Activated naive CD4-positive, alpha-beta T cell treated with anti-CD3 and anti-CD28 coated beads for 36 hours (primary cell): ENCODE measurements at regions of chr17 and their contacts with region 1.

Region 1: GRCh38 chr17:8189711-8190477 is at the start of gene BORCS6:
- DNase-seq: peak; percentile 98
- H3K4me3 Mint-ChIP-seq: no peak within 1 kb of the TSS
- H3K27ac Mint-ChIP-seq: peak within 1 kb of the TSS; percentile 82
- H3K4me1 Mint-ChIP-seq: peaks cover 7% of the 10 kb centered on the region
- H3K27me3 Mint-ChIP-seq: no peaks in the 10 kb centered on the region
- total RNA-seq, gene BORCS6: 4.0 to 4.3 TPM

Region 2: GRCh38 chr17:8079291-8080207 is 110.3 kb before region 1 on chr17:
- CTCF ChIA-PET with region 1: no interaction called
- intact Hi-C with region 1: loop called (anchors 1 kb)
- DNase-seq: peak; percentile 91
- H3K4me3 Mint-ChIP-seq: peak overlapping the region; percentile 95
- H3K27ac Mint-ChIP-seq: peak overlapping the region; percentile 88
- H3K4me1 Mint-ChIP-seq: peaks cover 13% of the 10 kb centered on the region
- H3K27me3 Mint-ChIP-seq: peaks cover 2% of the 10 kb centered on the region

Region 3: DNA sequence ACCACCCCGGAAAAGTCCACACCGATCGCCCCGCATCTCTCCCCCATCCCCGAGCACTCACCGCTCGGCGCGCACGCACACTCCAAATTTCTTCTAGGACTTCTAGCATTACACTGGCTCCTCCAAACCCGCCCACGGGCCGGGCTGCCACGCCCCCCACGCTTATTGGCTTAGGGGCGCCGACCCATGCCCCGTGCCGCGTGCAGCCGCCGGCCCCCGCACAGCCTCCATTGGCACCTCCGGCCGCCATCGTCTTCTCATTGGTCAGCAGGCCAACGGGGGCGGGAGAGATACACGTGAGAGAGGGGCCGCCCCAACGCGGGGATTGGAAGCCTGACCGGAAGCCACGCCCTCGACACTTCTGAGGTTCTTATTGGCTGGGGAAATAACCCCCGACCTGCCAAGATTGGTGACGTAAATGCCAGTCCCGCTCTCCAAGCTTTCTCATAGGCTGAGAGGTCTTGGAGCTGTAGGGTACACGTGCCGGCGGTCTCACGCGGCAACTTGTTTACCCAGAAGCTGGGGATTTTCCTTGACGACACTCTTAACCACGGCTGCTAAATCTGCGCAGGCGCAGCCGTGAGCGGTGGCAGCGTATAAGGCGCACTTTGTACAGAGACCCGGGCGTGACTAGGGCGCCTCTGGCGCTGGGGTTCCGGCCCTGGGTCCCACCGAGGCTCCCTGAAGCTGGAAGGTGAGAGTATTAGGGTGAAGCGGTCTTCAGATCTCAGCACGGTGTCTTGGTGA is 33.5 kb before region 1 on chr17:
- CTCF ChIA-PET with region 1: no interaction called
- intact Hi-C with region 1: loop called (anchors 1 kb)
- DNase-seq: peak; percentile 100
- H3K4me3 Mint-ChIP-seq: no peak overlapping the region
- H3K27ac Mint-ChIP-seq: no peak overlapping the region
- H3K4me1 Mint-ChIP-seq: peaks cover 62% of the 10 kb centered on the region
- H3K27me3 Mint-ChIP-seq: no peaks in the 10 kb centered on the region

Region 4: GRCh38 chr17:8204761-8205555 is 15.1 kb after region 1 on chr17:
- CTCF ChIA-PET with region 1: interaction called, 5 read pairs
- intact Hi-C with region 1: loop called (anchors 1 kb)
- DNase-seq: no peak
- H3K4me3 Mint-ChIP-seq: no peak overlapping the region
- H3K27ac Mint-ChIP-seq: no peak overlapping the region
- H3K4me1 Mint-ChIP-seq: peaks cover 10% of the 10 kb centered on the region
- H3K27me3 Mint-ChIP-seq: no peaks in the 10 kb centered on the region

Region 5: DNA sequence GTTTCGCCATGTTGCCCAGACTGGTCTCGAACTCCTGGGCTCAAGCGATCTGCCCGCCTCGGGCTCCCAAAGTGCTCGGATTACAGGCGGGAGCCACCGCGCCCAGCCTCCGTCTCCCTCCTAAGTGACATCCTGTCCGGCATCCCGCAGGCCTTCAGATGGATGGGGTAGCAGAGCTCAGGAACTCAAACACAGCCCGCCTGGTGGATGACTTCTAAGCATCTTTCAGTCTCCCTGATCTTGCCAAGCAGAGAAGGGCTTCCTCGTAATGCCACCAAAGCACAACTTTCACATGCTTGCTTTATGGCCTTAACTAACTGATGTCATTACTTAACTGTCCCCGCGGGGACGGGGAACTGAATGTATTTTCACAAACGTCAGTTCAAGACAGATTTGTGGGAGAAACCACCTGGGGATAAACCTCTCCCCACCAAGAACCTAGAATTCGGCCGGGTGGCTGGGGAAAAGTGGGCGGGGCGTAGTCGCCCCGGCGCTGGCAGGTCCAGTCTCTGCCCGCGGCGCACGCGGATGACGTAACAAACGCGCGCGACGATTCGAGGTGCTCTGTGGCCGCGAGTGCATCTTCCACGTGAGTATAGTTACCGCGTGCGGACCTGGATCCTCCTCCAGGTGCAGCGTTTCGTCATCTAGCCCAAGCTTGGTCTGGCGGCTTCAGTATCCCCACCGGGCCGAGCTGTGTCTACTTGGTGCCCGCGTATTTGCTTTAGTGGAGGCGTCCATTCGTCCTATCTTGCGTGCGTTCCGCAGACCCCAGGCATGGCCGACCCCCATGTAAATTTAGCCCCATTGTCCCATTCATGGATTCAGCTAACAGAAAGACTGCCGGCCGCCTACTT is 59.1 kb after region 1 on chr17 and contains the start of gene PFAS:
- CTCF ChIA-PET with region 1: interaction called, 6 read pairs
- intact Hi-C with region 1: loop called (anchors 1 kb)
- DNase-seq: peak; percentile 97
- H3K4me3 Mint-ChIP-seq: peak within 1 kb of the TSS; percentile 99
- H3K27ac Mint-ChIP-seq: peak within 1 kb of the TSS; percentile 100
- H3K4me1 Mint-ChIP-seq: peaks cover 37% of the 10 kb centered on the region
- H3K27me3 Mint-ChIP-seq: no peaks in the 10 kb centered on the region
- total RNA-seq, gene PFAS: 106 to 110 TPM

Region 6: GRCh38 chr17:8359769-8360168 is 169.9 kb after region 1 on chr17:
- CTCF ChIA-PET with region 1: no interaction called
- intact Hi-C with region 1: no loop called
- DNase-seq: no peak
- H3K4me3 Mint-ChIP-seq: no peak overlapping the region
- H3K27ac Mint-ChIP-seq: no peak overlapping the region
- H3K4me1 Mint-ChIP-seq: peaks cover 7% of the 10 kb centered on the region
- H3K27me3 Mint-ChIP-seq: no peaks in the 10 kb centered on the region